ENCODE measurements at regions of chr10 and their contacts with region 1.

Region 1: GRCh38 chr10:71795248-71795647 is 21.9 kb upstream of the VSIR start:
- DNase-seq: no peak
- ATAC-seq: no peak
- H3K4me3 ChIP-seq: no peak overlapping the region
- H3K27ac ChIP-seq: no peak overlapping the region
- H3K4me1 ChIP-seq: no peaks in the 10 kb centered on the region
- H3K27me3 ChIP-seq: 0 out of 2 replicates have a peak, but pooled peaks cover 4% of the 10 kb centered on the region
- CTCF ChIP-seq: no peak
- POLR2A ChIP-seq: no peak
- RAD21 ChIP-seq: no peak

Region 2: GRCh38 chr10:71582019-71582418 is 213.2 kb before region 1 on chr10:
- CTCF ChIA-PET with region 1: no interaction called
- POLR2A ChIA-PET with region 1: no interaction called
- RAD21 ChIA-PET with region 1: no interaction called
- intact Hi-C with region 1: loop called (anchors 10 kb)
- DNase-seq: no peak
- ATAC-seq: no peak
- H3K4me3 ChIP-seq: no peak overlapping the region
- H3K27ac ChIP-seq: no peak overlapping the region
- H3K4me1 ChIP-seq: no peaks in the 10 kb centered on the region
- H3K27me3 ChIP-seq: peaks cover 17% of the 10 kb centered on the region
- CTCF ChIP-seq: no peak
- POLR2A ChIP-seq: no peak
- RAD21 ChIP-seq: no peak

Measured in HCT116 (cell line).